ENCODE measurements at regions of chr16 and their contacts with region 1.

Region 1: DNA sequence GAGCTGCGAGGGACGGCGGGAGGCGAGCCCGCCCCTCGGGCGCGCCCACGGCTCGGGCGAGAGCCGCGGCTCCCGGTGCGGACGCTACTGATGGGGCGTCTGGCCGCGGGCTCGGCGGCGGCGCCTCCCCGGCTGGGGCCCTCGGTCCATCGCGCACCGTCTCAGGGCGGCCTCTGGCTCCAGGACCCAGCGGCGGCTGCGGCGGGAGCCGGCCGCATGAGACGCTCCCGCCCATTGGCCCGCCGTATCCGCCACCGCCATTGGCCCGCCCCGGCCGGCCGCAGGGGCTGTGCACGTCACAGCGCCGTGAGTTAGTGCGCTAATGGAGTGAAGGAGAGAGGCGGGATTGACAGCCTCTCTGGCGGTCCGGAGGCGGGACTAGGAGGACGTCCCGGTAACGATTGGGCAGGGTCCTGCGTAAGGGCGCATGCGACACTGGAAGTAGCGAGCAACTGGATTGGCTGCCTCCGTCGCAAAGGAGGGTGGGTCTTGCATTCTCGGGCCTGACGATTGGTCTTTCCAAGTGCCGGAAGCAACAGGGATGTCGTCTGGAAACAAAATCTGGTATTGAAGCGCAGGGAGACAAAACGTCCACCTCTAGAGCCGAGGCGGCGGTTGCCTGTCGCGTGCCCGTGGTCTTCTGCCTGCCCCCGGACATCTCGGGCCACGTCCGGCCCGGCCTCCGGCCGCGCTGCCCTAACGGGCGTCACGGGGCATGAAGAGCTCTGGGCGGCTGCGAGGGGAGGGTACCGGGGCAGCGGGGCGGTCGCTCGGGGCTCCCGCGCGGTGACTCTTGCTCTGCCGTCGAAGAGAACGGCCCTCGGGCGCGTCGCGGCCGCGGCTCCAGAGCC is at the start of gene ANKRD11:
- DNase-seq: peak; percentile 96 to 100 (median 98)
- ATAC-seq: peak; percentile 85
- H3K4me3 ChIP-seq: peak within 1 kb of the TSS; percentile 73
- H3K4me3 Mint-ChIP-seq: peak within 1 kb of the TSS; percentile 98
- H3K27ac ChIP-seq: peak within 1 kb of the TSS; percentile 81 to 95
- H3K27ac Mint-ChIP-seq: peak within 1 kb of the TSS; percentile 97
- H3K4me1 ChIP-seq: peaks cover 58% of the 10 kb centered on the region
- H3K4me1 Mint-ChIP-seq: peaks cover 59% of the 10 kb centered on the region
- H3K27me3 ChIP-seq: no peaks in the 10 kb centered on the region
- H3K27me3 Mint-ChIP-seq: no peaks in the 10 kb centered on the region
- CTCF ChIP-seq: no peak
- total RNA-seq, gene ANKRD11: 200 to 211 TPM

Region 2: DNA sequence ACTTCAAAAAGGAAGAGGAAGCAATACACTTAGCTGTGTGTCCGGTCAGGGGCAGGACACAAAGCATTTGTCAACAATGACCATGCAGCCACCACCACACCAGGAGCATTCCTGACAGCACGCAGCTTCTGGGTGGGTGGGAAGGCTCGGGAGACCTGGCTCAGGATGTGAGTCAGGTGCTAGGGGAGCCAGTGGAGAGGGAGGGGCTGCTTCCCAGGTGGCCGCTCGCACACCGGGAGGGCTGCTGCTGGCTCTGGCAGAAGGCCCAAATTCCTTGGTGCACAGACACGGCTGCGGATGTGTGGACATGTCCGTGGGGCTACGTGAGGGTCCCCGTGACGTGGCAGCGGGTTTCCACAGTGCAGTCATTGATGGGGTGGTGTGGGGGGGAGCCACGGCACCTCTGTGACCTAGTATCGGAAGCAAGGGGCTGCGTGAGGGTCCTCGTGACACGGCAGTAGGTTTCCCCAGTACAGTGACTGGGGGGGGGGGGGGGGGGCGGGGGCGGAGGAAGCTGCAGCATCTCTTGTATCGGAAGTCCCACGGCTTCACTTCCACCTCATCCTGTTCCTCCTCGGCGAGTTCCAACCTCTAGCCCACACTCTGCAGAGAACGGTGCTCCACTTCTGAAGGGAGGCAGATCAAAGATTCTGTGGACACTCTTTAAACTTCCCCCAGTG is 160.3 kb before region 1 on chr16:
- CTCF ChIA-PET with region 1: no interaction called
- POLR2A ChIA-PET with region 1: interaction called, 4 read pairs
- intact Hi-C with region 1: loop called (anchors 2 to 5 kb)
- DNase-seq: peak in 6 of 14 experiments; percentile 32 to 84 (median 72)
- ATAC-seq: peak; percentile 67
- H3K4me3 ChIP-seq: peak overlapping the region; percentile 13
- H3K4me3 Mint-ChIP-seq: peak overlapping the region; percentile 10
- H3K27ac ChIP-seq: peak overlapping the region; percentile 60 to 67
- H3K27ac Mint-ChIP-seq: peak overlapping the region; percentile 80
- H3K4me1 ChIP-seq: peaks cover 82% of the 10 kb centered on the region
- H3K4me1 Mint-ChIP-seq: peaks cover 84% of the 10 kb centered on the region
- H3K27me3 ChIP-seq: no peaks in the 10 kb centered on the region
- H3K27me3 Mint-ChIP-seq: no peaks in the 10 kb centered on the region
- CTCF ChIP-seq: no peak

Region 3: DNA sequence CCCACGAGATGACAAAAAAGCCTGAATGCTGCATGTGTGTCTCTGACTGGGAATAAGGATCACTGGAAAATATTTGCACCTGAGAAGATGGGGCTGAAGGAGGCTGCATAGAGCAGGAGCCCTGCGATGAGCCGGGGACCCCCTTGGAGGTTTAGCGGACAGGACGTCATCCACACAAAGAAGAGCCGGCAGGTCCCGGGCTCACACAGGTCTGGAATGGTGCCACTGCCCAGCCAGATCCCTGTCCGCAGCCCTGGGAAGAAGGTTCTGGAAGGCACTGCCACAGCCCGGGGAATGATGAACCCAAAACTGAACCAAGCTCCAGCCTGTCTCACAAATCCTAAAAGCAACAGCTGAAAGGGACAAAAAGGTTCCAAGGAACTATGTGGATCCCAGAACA is 102.1 kb before region 1 on chr16:
- CTCF ChIA-PET with region 1: interaction called, 4 read pairs
- POLR2A ChIA-PET with region 1: no interaction called
- intact Hi-C with region 1: loop called in 1 of 2 experiments (anchors 1 kb)
- DNase-seq: no peak
- ATAC-seq: no peak
- H3K4me3 ChIP-seq: no peak overlapping the region
- H3K4me3 Mint-ChIP-seq: peak overlapping the region; percentile 62
- H3K27ac ChIP-seq: no peak overlapping the region
- H3K27ac Mint-ChIP-seq: peak overlapping the region; percentile 80
- H3K4me1 ChIP-seq: peaks cover 61% of the 10 kb centered on the region
- H3K4me1 Mint-ChIP-seq: peaks cover 76% of the 10 kb centered on the region
- H3K27me3 ChIP-seq: no peaks in the 10 kb centered on the region
- H3K27me3 Mint-ChIP-seq: no peaks in the 10 kb centered on the region
- CTCF ChIP-seq: no peak

Region 4: GRCh38 chr16:89473791-89474414 is 16.7 kb before region 1 on chr16:
- CTCF ChIA-PET with region 1: interaction called, 9 read pairs
- POLR2A ChIA-PET with region 1: interaction called, 12 read pairs
- intact Hi-C with region 1: loop called in 1 of 2 experiments (anchors 2 kb)
- DNase-seq: no peak
- ATAC-seq: no peak
- H3K4me3 ChIP-seq: no peak overlapping the region
- H3K4me3 Mint-ChIP-seq: peak overlapping the region; percentile 79
- H3K27ac ChIP-seq: no peak overlapping the region
- H3K27ac Mint-ChIP-seq: peak overlapping the region; percentile 71
- H3K4me1 ChIP-seq: peaks cover 95% of the 10 kb centered on the region
- H3K4me1 Mint-ChIP-seq: peaks cover 82% of the 10 kb centered on the region
- H3K27me3 ChIP-seq: no peaks in the 10 kb centered on the region
- H3K27me3 Mint-ChIP-seq: no peaks in the 10 kb centered on the region
- CTCF ChIP-seq: no peak

Region 5: GRCh38 chr16:89560378-89561141 is 69.9 kb after region 1 on chr16 and contains the start of gene RPL13:
- CTCF ChIA-PET with region 1: interaction called, 3 read pairs
- POLR2A ChIA-PET with region 1: interaction called, 4 read pairs
- intact Hi-C with region 1: loop called (anchors 1 to 5 kb)
- DNase-seq: peak; percentile 86 to 97 (median 91)
- ATAC-seq: peak; percentile 88
- H3K4me3 ChIP-seq: peak within 1 kb of the TSS; percentile 75
- H3K4me3 Mint-ChIP-seq: peak within 1 kb of the TSS; percentile 97
- H3K27ac ChIP-seq: peak within 1 kb of the TSS; percentile 82 to 90
- H3K27ac Mint-ChIP-seq: peak within 1 kb of the TSS; percentile 99
- H3K4me1 ChIP-seq: peaks cover 68% of the 10 kb centered on the region
- H3K4me1 Mint-ChIP-seq: peaks cover 56% of the 10 kb centered on the region
- H3K27me3 ChIP-seq: peaks cover 0 to 3% of the 10 kb centered on the region in 2 experiments
- H3K27me3 Mint-ChIP-seq: no peaks in the 10 kb centered on the region
- CTCF ChIP-seq: no peak
- total RNA-seq, gene RPL13: 4,971 to 5,051 TPM

Region 6: DNA sequence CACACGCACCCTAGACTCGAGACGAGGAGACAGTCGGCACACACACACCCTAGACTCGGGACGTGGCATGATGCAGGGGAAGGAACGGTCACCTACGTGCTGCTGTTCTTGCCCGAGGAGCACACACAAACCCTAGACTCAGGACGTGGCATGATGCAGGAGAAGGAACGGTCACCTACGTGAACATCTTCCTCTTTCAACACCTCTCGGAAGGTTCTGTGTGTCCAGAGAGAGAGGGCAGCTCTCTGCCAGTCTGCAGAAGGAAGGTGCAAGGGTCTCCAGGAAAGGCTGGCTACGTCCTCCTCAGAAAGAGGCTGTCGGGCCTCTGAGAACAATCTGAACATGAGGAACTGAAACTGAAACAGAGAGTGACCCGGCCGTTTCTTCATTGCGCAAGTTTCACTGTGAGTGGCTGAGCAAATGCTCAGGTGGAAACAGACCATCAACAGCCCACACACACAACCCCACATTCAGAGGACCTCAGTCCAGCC is 274.1 kb after region 1 on chr16:
- CTCF ChIA-PET with region 1: no interaction called
- POLR2A ChIA-PET with region 1: no interaction called
- intact Hi-C with region 1: no loop called
- DNase-seq: peak in 7 of 14 experiments; percentile 7 to 80 (median 49)
- ATAC-seq: peak; percentile 48
- H3K4me3 ChIP-seq: peak overlapping the region; percentile 54
- H3K4me3 Mint-ChIP-seq: peak overlapping the region; percentile 61
- H3K27ac ChIP-seq: peak overlapping the region; percentile 30 to 61
- H3K27ac Mint-ChIP-seq: peak overlapping the region; percentile 83
- H3K4me1 ChIP-seq: peaks cover 51% of the 10 kb centered on the region
- H3K4me1 Mint-ChIP-seq: peaks cover 29% of the 10 kb centered on the region
- H3K27me3 ChIP-seq: no peaks in the 10 kb centered on the region
- H3K27me3 Mint-ChIP-seq: no peaks in the 10 kb centered on the region
- CTCF ChIP-seq: no peak